AG04449 (cell line): ENCODE measurements at regions of chr16 and their contacts with region 1.

Region 1: DNA sequence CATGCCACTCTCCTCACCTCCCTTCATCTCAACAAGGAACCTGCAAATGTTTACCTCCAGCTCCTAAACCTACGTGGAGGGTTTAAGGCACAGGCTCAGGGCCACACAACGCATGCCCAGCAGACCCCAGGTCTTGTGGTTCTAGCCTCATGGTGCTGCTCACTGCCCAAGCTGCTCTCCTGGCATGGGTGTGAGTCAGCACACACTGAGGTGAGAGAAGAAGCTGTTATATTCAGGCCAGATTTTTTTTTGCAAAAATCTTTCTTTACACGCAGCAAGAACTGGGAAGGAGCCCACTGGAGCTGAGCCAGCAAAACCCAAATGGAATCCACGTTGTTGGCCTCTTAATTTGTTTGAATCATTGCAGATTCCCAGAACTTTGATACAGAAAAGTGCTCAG is 5.5 kb upstream of the C16orf96 start:
- DNase-seq: no peak
- H3K4me3 ChIP-seq: no peak overlapping the region
- CTCF ChIP-seq: no peak

Region 2: GRCh38 chr16:4500272-4500671 is 50.3 kb before region 1 on chr16:
- CTCF ChIA-PET with region 1: interaction called, 267 read pairs
- POLR2A ChIA-PET with region 1: no interaction called
- DNase-seq: no peak
- H3K4me3 ChIP-seq: no peak overlapping the region
- CTCF ChIP-seq: no peak

Region 3: DNA sequence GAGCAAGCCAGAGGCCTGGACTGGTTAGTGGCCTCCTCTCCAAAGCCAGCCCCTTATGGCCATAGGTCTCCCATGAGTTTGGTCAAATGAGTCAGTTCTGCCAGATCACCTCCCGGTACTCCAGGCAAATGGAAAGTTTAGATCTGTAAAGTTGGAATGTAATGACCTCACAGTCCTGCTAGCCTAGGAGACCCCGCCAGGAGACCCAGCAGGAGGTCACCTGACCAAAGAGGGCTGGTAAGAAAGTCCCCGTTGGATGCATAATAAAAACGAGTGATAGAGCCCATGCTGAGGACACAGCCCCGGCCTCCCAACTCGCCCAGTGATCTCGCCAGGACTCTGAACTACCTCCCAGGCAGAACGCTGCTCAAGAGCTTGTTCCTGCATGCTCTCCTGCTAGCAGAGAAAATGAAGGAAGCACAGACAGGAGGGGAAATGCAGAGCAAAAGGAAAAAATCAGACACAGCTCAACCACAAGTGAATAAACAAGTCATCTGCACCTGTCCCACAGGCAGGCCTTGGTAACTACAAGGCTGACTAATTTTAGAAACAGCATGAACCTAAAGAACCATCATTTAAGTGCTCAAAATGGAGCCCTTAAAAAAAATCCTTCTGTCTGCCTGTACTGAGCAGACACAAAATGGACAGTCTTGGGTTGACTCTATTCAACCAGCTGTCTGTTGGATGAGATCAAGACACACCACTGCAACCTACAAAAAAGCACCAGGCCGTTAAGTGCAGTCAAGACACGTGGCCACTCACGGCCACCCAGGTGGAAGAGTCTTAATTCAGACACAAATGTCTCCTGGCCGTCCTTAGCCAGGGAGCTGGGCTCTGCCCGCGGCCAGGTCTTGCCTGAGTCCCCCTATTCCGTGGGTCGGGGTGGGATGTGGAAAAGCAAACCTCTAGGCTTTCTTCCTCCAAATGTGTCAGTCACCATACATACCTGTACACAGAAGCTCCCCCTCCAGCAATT is 21.2 kb before region 1 on chr16:
- CTCF ChIA-PET with region 1: interaction called, 13 read pairs
- POLR2A ChIA-PET with region 1: no interaction called
- DNase-seq: no peak
- H3K4me3 ChIP-seq: no peak overlapping the region
- CTCF ChIP-seq: no peak

Region 4: DNA sequence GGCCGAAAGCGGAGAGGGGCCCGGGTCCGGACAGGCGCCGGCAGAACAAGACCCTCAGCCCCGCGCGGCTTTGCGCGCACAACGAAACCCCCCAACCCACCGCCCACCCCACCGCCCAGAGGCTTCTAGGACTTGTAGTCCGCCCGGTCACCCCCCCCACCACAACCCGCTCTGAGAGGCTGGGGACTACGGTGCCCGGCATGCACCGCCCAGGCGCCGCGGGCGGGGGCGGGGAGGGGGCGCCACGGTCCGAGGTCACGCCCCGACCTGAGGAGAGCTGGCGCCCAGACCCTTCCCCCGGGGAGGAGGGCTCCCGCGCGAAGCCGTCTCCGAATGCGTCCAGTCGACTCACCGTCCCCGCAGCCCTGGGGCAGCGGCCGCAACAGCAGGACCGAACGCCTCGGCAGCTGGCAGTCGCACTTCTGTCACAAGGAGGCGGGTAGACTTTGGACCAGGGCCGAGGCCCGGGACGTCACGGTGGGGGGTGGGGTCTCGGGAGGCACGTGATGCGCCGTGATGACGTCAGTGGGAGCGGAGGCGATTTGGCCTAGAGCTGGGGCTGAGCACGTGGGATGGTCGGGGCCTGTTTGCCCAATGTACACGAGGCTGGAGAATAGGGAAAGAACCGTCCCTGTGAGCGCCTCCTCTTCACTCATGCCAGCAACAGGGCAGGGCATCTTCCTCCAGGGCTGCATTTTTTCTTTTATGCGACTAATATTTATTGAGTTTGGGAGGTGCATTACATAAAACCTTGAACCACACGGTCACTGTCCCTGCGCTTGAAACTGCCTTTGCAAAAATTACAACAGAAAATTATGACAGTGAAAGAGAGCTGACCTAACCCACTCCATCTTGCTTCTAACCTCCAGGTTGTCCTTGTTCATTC is 12.0 kb before region 1 on chr16 and contains the start of gene CDIP1:
- CTCF ChIA-PET with region 1: interaction called, 32 read pairs
- POLR2A ChIA-PET with region 1: no interaction called
- DNase-seq: peak; percentile 46
- H3K4me3 ChIP-seq: peak within 1 kb of the TSS; percentile 82
- CTCF ChIP-seq: no peak

Region 5: DNA sequence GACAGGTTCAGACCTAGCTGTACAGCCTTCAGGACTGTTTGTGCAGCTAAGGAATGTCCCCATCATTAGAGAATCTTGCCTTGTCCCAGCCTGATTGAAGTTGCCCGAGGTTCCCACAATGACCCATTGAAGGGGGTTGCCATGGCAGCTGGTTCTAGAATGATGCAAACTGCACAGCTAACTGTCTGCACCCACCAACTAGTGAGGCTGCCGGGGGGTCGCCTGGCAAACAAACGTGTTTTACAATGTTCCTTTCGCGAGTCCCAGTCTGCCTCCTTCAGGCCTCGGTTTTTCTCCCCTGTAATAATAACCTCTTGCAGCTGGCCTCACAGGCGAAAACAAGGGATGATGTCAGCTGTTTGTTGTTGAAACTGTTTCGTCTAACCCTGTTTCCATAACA is 11.0 kb after region 1 on chr16:
- CTCF ChIA-PET with region 1: interaction called, 23 read pairs
- POLR2A ChIA-PET with region 1: no interaction called
- DNase-seq: no peak
- H3K4me3 ChIP-seq: no peak overlapping the region
- CTCF ChIP-seq: no peak